CD4-positive, alpha-beta memory T cell (primary cell): ENCODE measurements at regions of chr13 and their contacts with region 1.

Region 1: GRCh38 chr13:24228852-24229458 is 68.4 kb downstream of the SPATA13 start:
- DNase-seq: peak; percentile 35 to 54 (median 44)
- H3K4me3 ChIP-seq: no peak overlapping the region
- H3K4me3 Mint-ChIP-seq: no peak overlapping the region
- H3K27ac ChIP-seq: no peak overlapping the region
- H3K27ac Mint-ChIP-seq: no peak overlapping the region
- H3K4me1 ChIP-seq: peaks cover 11% of the 10 kb centered on the region
- H3K4me1 Mint-ChIP-seq: peaks cover 7 to 28% (median 13%) of the 10 kb centered on the region in 4 donors
- H3K27me3 ChIP-seq: no peaks in the 10 kb centered on the region
- H3K27me3 Mint-ChIP-seq: no peaks in the 10 kb centered on the region

Region 2: GRCh38 chr13:24020375-24020830 is 208.6 kb before region 1 on chr13:
- CTCF ChIA-PET with region 1: interaction called, 12 read pairs
- POLR2A ChIA-PET with region 1: no interaction called
- intact Hi-C with region 1: no loop called
- DNase-seq: peak in 3 of 5 donors; percentile 9 to 17 (median 13)
- H3K4me3 ChIP-seq: no peak overlapping the region
- H3K4me3 Mint-ChIP-seq: no peak overlapping the region
- H3K27ac ChIP-seq: no peak overlapping the region
- H3K27ac Mint-ChIP-seq: no peak overlapping the region
- H3K4me1 ChIP-seq: no peaks in the 10 kb centered on the region
- H3K4me1 Mint-ChIP-seq: no peaks in the 10 kb centered on the region
- H3K27me3 ChIP-seq: no peaks in the 10 kb centered on the region
- H3K27me3 Mint-ChIP-seq: peaks cover 1 to 2% of the 10 kb centered on the region in 2 donors

Region 3: GRCh38 chr13:24097667-24098066 is 131.3 kb before region 1 on chr13:
- CTCF ChIA-PET with region 1: no interaction called
- POLR2A ChIA-PET with region 1: no interaction called
- intact Hi-C with region 1: no loop called
- DNase-seq: peak in 1 of 5 donors; percentile 4
- H3K4me3 ChIP-seq: no peak overlapping the region
- H3K4me3 Mint-ChIP-seq: peak overlapping the region in 4 of 8 donors; percentile 19 to 47 (median 28)
- H3K27ac ChIP-seq: no peak overlapping the region
- H3K27ac Mint-ChIP-seq: peak overlapping the region in 2 of 7 donors; percentile 9 to 12
- H3K4me1 ChIP-seq: peaks cover 11% of the 10 kb centered on the region
- H3K4me1 Mint-ChIP-seq: peaks cover 9 to 17% (median 13%) of the 10 kb centered on the region in 4 donors
- H3K27me3 ChIP-seq: no peaks in the 10 kb centered on the region
- H3K27me3 Mint-ChIP-seq: peaks cover 0 to 4% of the 10 kb centered on the region in 2 donors

Region 4: GRCh38 chr13:24241336-24241735 is 12.4 kb after region 1 on chr13:
- CTCF ChIA-PET with region 1: interaction called, 13 read pairs
- POLR2A ChIA-PET with region 1: no interaction called
- intact Hi-C with region 1: no loop called
- DNase-seq: no peak
- H3K4me3 ChIP-seq: no peak overlapping the region
- H3K4me3 Mint-ChIP-seq: no peak overlapping the region
- H3K27ac ChIP-seq: no peak overlapping the region
- H3K27ac Mint-ChIP-seq: peak overlapping the region in 1 of 7 donors; percentile 37
- H3K4me1 ChIP-seq: no peaks in the 10 kb centered on the region
- H3K4me1 Mint-ChIP-seq: no peaks in the 10 kb centered on the region
- H3K27me3 ChIP-seq: no peaks in the 10 kb centered on the region
- H3K27me3 Mint-ChIP-seq: peaks cover 0 to 1% of the 10 kb centered on the region in 2 donors

Region 5: DNA sequence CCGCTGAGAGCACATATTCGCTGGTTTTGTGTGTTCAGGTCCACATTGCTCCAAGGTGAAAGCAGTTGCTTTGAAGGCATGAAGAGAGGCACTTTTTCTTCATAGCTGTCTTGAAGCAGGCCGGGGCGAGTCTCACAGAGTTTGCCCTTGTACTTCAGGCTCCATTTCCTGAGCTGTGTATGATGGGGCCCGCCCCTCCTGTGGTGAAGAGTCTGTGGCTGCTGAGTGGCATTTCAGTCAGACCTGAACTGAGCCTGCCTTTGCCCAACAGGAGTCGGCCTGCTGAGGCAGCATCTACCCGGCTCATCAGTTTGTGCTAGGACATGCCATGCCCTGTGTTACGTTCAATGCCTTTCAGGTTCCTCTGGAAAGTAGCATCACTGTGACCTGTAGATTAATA is 36.0 kb after region 1 on chr13:
- CTCF ChIA-PET with region 1: interaction called, 33 read pairs
- POLR2A ChIA-PET with region 1: interaction called, 7 read pairs
- intact Hi-C with region 1: no loop called
- DNase-seq: peak; percentile 83 to 93 (median 84)
- H3K4me3 ChIP-seq: peak overlapping the region; percentile 2 to 39
- H3K4me3 Mint-ChIP-seq: peak overlapping the region; percentile 68 to 92 (median 86)
- H3K27ac ChIP-seq: peak overlapping the region; percentile 73
- H3K27ac Mint-ChIP-seq: peak overlapping the region; percentile 98 to 99 (median 99)
- H3K4me1 ChIP-seq: peaks cover 100% of the 10 kb centered on the region
- H3K4me1 Mint-ChIP-seq: peaks cover 80 to 98% (median 88%) of the 10 kb centered on the region in 4 donors
- H3K27me3 ChIP-seq: no peaks in the 10 kb centered on the region
- H3K27me3 Mint-ChIP-seq: no peaks in the 10 kb centered on the region

Region 6: DNA sequence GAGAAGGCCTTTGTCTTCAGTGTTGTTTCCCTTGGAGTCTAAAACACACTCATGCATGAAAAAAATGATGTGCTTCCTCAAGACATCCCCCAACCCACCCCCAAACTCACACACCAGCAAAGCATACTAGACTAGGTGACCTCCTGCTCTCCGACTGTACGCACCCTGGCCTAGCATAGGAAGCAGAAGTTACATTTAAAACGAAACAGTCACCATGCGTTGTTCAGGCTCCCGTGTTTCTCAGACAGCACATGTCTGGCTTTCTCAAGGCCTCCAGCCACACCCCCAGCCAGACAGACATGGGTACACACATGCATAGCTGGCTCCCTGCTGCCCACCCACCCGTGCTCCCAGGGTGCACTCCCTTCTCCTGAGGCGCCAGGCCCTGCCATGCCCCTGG is 51.8 kb after region 1 on chr13:
- CTCF ChIA-PET with region 1: interaction called, 24 read pairs
- POLR2A ChIA-PET with region 1: no interaction called
- intact Hi-C with region 1: no loop called
- DNase-seq: no peak
- H3K4me3 ChIP-seq: no peak overlapping the region
- H3K4me3 Mint-ChIP-seq: no peak overlapping the region
- H3K27ac ChIP-seq: peak overlapping the region; percentile 20
- H3K27ac Mint-ChIP-seq: peak overlapping the region in 6 of 7 donors; percentile 52 to 99 (median 70)
- H3K4me1 ChIP-seq: peaks cover 70% of the 10 kb centered on the region
- H3K4me1 Mint-ChIP-seq: peaks cover 46 to 77% (median 59%) of the 10 kb centered on the region in 4 donors
- H3K27me3 ChIP-seq: no peaks in the 10 kb centered on the region
- H3K27me3 Mint-ChIP-seq: no peaks in the 10 kb centered on the region

Region 7: GRCh38 chr13:25018729-25019115 is 789.8 kb after region 1 on chr13:
- CTCF ChIA-PET with region 1: no interaction called
- POLR2A ChIA-PET with region 1: no interaction called
- intact Hi-C with region 1: no loop called
- DNase-seq: no peak
- H3K4me3 ChIP-seq: no peak overlapping the region
- H3K4me3 Mint-ChIP-seq: peak overlapping the region in 3 of 8 donors; percentile 21 to 49 (median 27)
- H3K27ac ChIP-seq: no peak overlapping the region
- H3K27ac Mint-ChIP-seq: no peak overlapping the region
- H3K4me1 ChIP-seq: no peaks in the 10 kb centered on the region
- H3K4me1 Mint-ChIP-seq: peaks cover 4 to 12% (median 7%) of the 10 kb centered on the region in 4 donors
- H3K27me3 ChIP-seq: no peaks in the 10 kb centered on the region
- H3K27me3 Mint-ChIP-seq: peaks cover 10 to 27% of the 10 kb centered on the region in 2 donors